B cell (primary cell): ENCODE measurements at regions of chr15 and their contacts with region 1.

Region 1: DNA sequence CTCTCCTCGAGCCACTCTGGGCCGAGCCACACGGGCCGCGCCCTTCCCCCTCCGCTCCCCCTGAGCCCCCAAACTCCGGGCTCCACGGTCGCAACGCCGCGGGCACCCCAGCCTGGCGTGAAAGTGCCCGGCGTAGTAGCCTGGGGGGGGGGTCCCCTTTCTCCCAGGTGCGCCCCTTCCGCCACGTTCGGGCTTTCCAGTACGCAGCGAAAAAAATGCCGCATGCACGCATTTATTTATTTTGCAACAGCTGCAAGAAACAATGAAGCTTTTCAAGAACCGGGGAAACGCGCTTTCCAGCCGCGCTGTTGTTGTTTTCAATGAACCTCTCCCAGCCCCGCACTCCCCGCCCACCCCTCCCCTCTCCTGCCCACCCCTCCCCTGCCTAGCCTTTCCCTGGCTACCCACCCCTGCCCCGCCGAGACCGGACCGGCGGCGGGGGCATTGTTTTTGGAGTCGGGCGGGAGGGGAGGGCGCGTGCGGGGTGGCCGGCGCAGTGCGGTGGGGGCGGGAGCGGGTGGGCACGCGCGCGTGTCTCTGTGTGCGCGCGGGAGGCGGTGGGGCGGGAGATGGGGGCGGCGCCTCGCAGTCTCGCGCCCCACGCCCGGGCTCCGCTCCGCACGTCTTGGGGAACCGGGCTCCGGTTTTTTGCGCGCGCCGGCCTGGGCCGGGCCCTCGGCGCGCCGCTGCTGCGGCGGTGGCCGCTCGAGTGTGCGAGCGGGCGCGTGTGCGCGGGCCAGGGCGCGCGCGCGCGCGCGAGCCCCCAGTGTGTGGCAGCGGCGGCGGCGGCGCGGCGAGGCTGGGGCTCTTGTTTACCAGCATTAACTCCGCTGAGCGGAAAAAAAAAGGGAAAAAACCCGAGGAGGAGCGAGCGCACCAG is at the start of gene IGF1R:
- DNase-seq: peak; percentile 94
- ATAC-seq: peak; percentile 80
- H3K4me3 ChIP-seq: peak within 1 kb of the TSS; percentile 42 to 81 (median 78)
- H3K4me3 Mint-ChIP-seq: peak within 1 kb of the TSS; percentile 87
- H3K27ac ChIP-seq: peak within 1 kb of the TSS; percentile 49
- H3K27ac Mint-ChIP-seq: peak within 1 kb of the TSS; percentile 92
- H3K4me1 ChIP-seq: peaks cover 23 to 31% of the 10 kb centered on the region in 2 donors
- H3K4me1 Mint-ChIP-seq: peaks cover 23% of the 10 kb centered on the region
- H3K27me3 ChIP-seq: peaks cover 0 to 23% (median 7%) of the 10 kb centered on the region in 4 experiments
- H3K27me3 Mint-ChIP-seq: peaks cover 32% of the 10 kb centered on the region
- CTCF ChIP-seq: peak; percentile 29
- total RNA-seq, gene IGF1R: 23.1 and 27.3 TPM in 2 replicates

Region 2: DNA sequence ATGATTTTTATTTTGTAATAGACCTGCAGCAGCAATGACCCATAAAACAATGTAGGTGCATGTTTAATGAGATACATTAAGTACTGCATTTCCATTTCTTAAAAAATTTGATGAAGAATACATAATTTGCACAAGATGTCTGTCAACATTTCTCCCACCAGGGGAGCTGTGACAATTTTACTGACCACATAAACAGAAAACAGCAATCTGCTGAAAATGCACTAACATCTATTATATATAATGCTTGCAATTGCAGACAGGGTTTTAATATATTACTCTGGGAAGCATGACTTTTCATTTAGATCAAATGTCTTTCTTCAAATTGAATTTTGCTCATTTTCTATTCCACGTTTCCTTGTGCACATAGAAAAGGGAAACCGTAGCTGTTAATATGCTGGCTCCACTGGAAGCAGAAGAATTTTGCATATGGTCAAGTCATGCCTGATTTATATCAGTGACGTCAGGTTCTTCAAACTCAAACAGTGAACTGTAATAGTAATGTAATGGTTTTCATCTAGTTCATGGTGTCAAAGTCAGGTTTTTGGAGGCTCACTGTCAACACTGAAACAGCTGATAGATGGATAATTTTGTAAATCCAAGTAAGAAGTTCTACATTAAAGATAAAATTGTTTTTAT is 79.5 kb before region 1 on chr15:
- CTCF ChIA-PET with region 1: no interaction called
- POLR2A ChIA-PET with region 1: no interaction called
- intact Hi-C with region 1: no loop called
- DNase-seq: no peak
- ATAC-seq: no peak
- H3K4me3 ChIP-seq: no peak overlapping the region
- H3K4me3 Mint-ChIP-seq: no peak overlapping the region
- H3K27ac ChIP-seq: no peak overlapping the region
- H3K27ac Mint-ChIP-seq: no peak overlapping the region
- H3K4me1 ChIP-seq: no peaks in the 10 kb centered on the region
- H3K4me1 Mint-ChIP-seq: no peaks in the 10 kb centered on the region
- H3K27me3 ChIP-seq: no peaks in the 10 kb centered on the region
- H3K27me3 Mint-ChIP-seq: peaks cover 10% of the 10 kb centered on the region
- CTCF ChIP-seq: no peak

Region 3: GRCh38 chr15:98599909-98600691 is 47.9 kb before region 1 on chr15:
- CTCF ChIA-PET with region 1: interaction called, 5 read pairs
- POLR2A ChIA-PET with region 1: interaction called, 3 read pairs
- intact Hi-C with region 1: loop called (anchors 2 kb)
- DNase-seq: peak; percentile 67
- ATAC-seq: peak; percentile 62
- H3K4me3 ChIP-seq: peak overlapping the region; percentile 36 to 77 (median 63)
- H3K4me3 Mint-ChIP-seq: peak overlapping the region; percentile 87
- H3K27ac ChIP-seq: peak overlapping the region; percentile 13 to 70
- H3K27ac Mint-ChIP-seq: peak overlapping the region; percentile 74
- H3K4me1 ChIP-seq: peaks cover 13% of the 10 kb centered on the region in 2 donors
- H3K4me1 Mint-ChIP-seq: peaks cover 14% of the 10 kb centered on the region
- H3K27me3 ChIP-seq: peaks cover 0 to 6% (median 0%) of the 10 kb centered on the region in 4 experiments
- H3K27me3 Mint-ChIP-seq: peaks cover 10% of the 10 kb centered on the region
- CTCF ChIP-seq: no peak

Region 4: GRCh38 chr15:98779463-98780071 is 131.6 kb after region 1 on chr15:
- CTCF ChIA-PET with region 1: interaction called, 3 read pairs
- POLR2A ChIA-PET with region 1: no interaction called
- intact Hi-C with region 1: loop called (anchors 5 kb)
- DNase-seq: peak; percentile 76
- ATAC-seq: peak; percentile 84
- H3K4me3 ChIP-seq: no peak overlapping the region
- H3K4me3 Mint-ChIP-seq: peak overlapping the region; percentile 24
- H3K27ac ChIP-seq: no peak overlapping the region
- H3K27ac Mint-ChIP-seq: no peak overlapping the region
- H3K4me1 ChIP-seq: peaks cover 15 to 30% of the 10 kb centered on the region in 2 donors
- H3K4me1 Mint-ChIP-seq: peaks cover 19% of the 10 kb centered on the region
- H3K27me3 ChIP-seq: no peaks in the 10 kb centered on the region
- H3K27me3 Mint-ChIP-seq: peaks cover 22% of the 10 kb centered on the region
- CTCF ChIP-seq: peak; percentile 97

Region 5: GRCh38 chr15:99733268-99734039 is 1085.4 kb after region 1 on chr15 and contains the start of gene LYSMD4:
- CTCF ChIA-PET with region 1: no interaction called
- POLR2A ChIA-PET with region 1: no interaction called
- intact Hi-C with region 1: loop called (anchors 10 kb)
- DNase-seq: peak; percentile 96
- ATAC-seq: peak; percentile 100
- H3K4me3 ChIP-seq: peak within 1 kb of the TSS; percentile 12 to 89 (median 77)
- H3K4me3 Mint-ChIP-seq: peak within 1 kb of the TSS; percentile 90
- H3K27ac ChIP-seq: peak within 1 kb of the TSS; percentile 70 to 77
- H3K27ac Mint-ChIP-seq: peak within 1 kb of the TSS; percentile 90
- H3K4me1 ChIP-seq: peaks cover 10 to 13% of the 10 kb centered on the region in 2 donors
- H3K4me1 Mint-ChIP-seq: peaks cover 14% of the 10 kb centered on the region
- H3K27me3 ChIP-seq: no peaks in the 10 kb centered on the region
- H3K27me3 Mint-ChIP-seq: no peaks in the 10 kb centered on the region
- CTCF ChIP-seq: no peak
- total RNA-seq, gene LYSMD4: 8.6 and 9.7 TPM in 2 replicates